ENCODE measurements at regions of chr1 and their contacts with region 1.

Region 1: GRCh38 chr1:1869469-1869868 is 21.4 kb downstream of the GNB1 start:
- DNase-seq: no peak
- ATAC-seq: no peak
- H3K4me3 ChIP-seq: no peak overlapping the region
- H3K27ac ChIP-seq: no peak overlapping the region
- H3K4me1 ChIP-seq: peaks cover 18% of the 10 kb centered on the region; the same call in 1 of the 2 replicates
- H3K27me3 ChIP-seq: no peaks in the 10 kb centered on the region
- CTCF ChIP-seq: no peak
- POLR2A ChIP-seq: no peak
- RAD21 ChIP-seq: no peak

Region 2: DNA sequence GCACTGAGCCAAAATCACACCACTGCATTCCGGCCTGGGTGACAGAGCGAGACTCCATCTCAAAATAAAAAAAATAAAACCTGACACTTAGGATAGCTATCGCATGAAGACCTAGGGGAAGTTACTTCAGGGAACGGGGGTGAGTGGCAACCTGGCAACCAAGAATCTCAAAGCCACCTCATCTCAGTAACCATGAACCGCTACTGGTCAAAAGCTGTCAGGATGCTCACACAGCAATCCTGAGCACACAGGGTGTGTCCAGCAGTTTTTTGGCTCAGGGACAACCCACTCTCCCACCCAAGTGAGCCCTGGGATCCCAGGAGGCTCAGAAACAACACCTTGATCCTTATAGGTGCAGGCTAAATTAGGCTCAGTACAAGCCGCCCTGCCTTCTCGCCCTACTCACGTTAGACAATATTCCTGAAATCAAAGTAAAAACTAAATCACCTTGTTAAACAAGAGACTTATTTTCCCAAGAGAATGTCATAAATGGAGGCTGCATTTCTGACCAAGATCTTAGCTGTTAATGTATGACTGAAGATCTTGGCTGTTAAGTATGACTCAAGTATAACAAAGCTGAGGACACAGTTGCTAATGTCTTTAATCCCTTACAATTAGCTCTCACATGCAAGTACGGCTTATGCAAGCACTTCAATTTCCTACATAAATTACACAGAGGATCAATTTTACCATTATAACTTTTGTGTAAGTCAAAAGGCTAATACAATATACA is 42.9 kb before region 1 on chr1:
- CTCF ChIA-PET with region 1: no interaction called
- POLR2A ChIA-PET with region 1: no interaction called
- dilution Hi-C with region 1: no loop called
- in situ Hi-C with region 1: no loop called
- intact Hi-C with region 1: loop called (anchors 5 kb)
- DNase-seq: no peak
- ATAC-seq: peak; percentile 19
- H3K4me3 ChIP-seq: no peak overlapping the region
- H3K27ac ChIP-seq: no peak overlapping the region
- H3K4me1 ChIP-seq: peaks cover 10% of the 10 kb centered on the region
- H3K27me3 ChIP-seq: no peaks in the 10 kb centered on the region
- CTCF ChIP-seq: no peak
- POLR2A ChIP-seq: no peak
- RAD21 ChIP-seq: no peak

Region 3: DNA sequence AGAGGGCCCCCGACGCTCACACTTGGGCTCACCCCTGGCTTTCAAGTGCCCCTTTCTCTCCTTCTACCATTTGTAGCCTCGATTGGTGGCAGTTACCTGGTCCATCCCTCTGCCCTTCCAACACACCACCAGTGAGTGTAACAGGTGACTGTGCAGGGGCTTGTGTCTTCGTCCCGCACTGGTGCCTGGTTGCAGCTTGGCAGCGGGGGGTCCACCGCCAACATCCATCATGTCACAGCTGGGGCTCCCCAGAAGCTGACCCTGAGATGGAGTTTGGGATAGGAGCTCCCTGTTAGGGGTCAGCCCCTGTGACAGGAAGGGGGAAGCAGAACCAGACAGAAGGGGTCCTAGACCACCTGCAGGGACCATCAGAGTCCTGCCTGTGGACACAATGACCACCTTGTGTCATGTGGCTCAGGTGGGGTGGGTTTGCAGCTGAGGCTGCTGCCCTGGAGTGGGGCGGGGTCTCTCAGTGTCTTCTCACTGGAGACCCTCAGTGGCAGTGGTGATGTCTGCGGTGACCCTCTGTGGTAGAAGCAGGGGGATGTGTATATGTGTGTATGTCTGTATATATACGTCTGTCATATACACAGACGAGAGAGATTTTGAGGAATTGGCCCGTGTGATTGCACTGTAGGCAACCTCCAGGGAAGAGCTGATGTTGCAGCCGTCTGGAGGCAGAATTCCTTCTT is 42.0 kb after region 1 on chr1:
- CTCF ChIA-PET with region 1: no interaction called
- POLR2A ChIA-PET with region 1: no interaction called
- dilution Hi-C with region 1: no loop called
- in situ Hi-C with region 1: no loop called
- intact Hi-C with region 1: no loop called
- DNase-seq: no peak
- ATAC-seq: no peak
- H3K4me3 ChIP-seq: no peak overlapping the region
- H3K27ac ChIP-seq: no peak overlapping the region
- H3K4me1 ChIP-seq: peaks cover 4% of the 10 kb centered on the region
- H3K27me3 ChIP-seq: peaks cover 3% of the 10 kb centered on the region; the same call in 1 of the 2 replicates
- CTCF ChIP-seq: no peak
- POLR2A ChIP-seq: no peak
- RAD21 ChIP-seq: no peak